ENCODE measurements at regions of chr19 and their contacts with region 1.

Region 1: GRCh38 chr19:13880059-13881043 is 3.4 kb downstream of the NANOS3 start:
- DNase-seq: peak; percentile 99
- ATAC-seq: peak; percentile 94
- H3K4me3 Mint-ChIP-seq: peak overlapping the region; percentile 49
- H3K27ac Mint-ChIP-seq: peak overlapping the region; percentile 85
- H3K4me1 Mint-ChIP-seq: peaks cover 35% of the 10 kb centered on the region
- H3K27me3 Mint-ChIP-seq: no peaks in the 10 kb centered on the region

Region 2: GRCh38 chr19:13905938-13906904 is 25.9 kb after region 1 on chr19 and contains the starts of genes BRME1 and CC2D1A:
- CTCF ChIA-PET with region 1: interaction called, 7 read pairs
- POLR2A ChIA-PET with region 1: no interaction called
- intact Hi-C with region 1: loop called in 1 of 2 experiments (anchors 1 kb)
- DNase-seq: peak; percentile 99
- ATAC-seq: peak; percentile 97
- H3K4me3 Mint-ChIP-seq: peak within 1 kb of the TSS; percentile 75
- H3K27ac Mint-ChIP-seq: peak within 1 kb of the TSS; percentile 93
- H3K4me1 Mint-ChIP-seq: peaks cover 14% of the 10 kb centered on the region
- H3K27me3 Mint-ChIP-seq: no peaks in the 10 kb centered on the region
- total RNA-seq, gene BRME1: 5.3 to 5.5 TPM
- total RNA-seq, gene CC2D1A: 30.2 to 34.3 TPM

Region 3: DNA sequence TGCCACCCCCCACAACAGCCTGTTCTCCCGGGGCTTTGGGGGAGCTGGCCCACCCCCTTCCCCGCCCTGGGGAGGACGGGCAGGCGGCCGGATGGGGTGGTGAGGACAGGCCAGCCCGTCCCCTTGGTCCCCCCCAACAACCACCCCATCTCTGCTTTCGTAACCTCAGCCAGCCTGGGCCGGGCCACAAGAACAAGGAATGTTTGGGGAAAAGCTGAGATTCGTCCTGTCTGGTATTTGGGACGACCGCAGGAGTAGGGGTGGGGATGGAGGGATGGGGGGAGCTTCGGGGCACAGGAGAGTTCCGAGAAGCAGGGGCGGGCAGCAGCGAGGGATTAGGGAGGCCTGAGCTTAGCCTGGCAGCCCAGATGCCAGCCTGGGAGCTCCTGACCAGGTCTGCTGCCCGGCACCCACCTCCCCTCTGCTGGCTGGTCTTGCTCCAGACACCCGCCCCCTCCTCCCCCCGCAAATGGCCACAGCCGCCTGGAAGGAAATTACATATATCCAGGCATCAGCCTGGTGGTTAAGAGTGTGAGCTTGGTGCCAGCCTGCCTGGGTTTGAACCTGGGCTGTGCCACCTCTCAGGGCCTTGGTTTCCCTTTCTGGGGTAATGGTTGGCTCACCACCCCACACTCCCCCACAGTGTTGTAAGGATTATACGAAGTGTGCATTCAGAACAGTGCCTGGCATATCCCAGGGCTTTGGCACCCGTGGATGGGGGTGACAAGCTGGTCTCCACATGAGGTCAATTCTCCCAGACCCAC is 58.1 kb after region 1 on chr19 and contains the start of gene PODNL1:
- CTCF ChIA-PET with region 1: no interaction called
- POLR2A ChIA-PET with region 1: no interaction called
- intact Hi-C with region 1: no loop called
- DNase-seq: no peak
- ATAC-seq: no peak
- H3K4me3 Mint-ChIP-seq: no peak within 1 kb of the TSS
- H3K27ac Mint-ChIP-seq: no peak within 1 kb of the TSS
- H3K4me1 Mint-ChIP-seq: peaks cover 1% of the 10 kb centered on the region
- H3K27me3 Mint-ChIP-seq: peaks cover 6% of the 10 kb centered on the region
- total RNA-seq, gene PODNL1: 0.25 to 0.46 TPM

Region 4: GRCh38 chr19:14031719-14032480 is 151.5 kb after region 1 on chr19 and contains the start of gene IL27RA:
- CTCF ChIA-PET with region 1: interaction called, 8 read pairs
- POLR2A ChIA-PET with region 1: no interaction called
- intact Hi-C with region 1: loop called (anchors 1 to 5 kb)
- DNase-seq: peak; percentile 83
- ATAC-seq: peak; percentile 79
- H3K4me3 Mint-ChIP-seq: peak within 1 kb of the TSS; percentile 92
- H3K27ac Mint-ChIP-seq: peak within 1 kb of the TSS; percentile 90
- H3K4me1 Mint-ChIP-seq: peaks cover 18% of the 10 kb centered on the region
- H3K27me3 Mint-ChIP-seq: no peaks in the 10 kb centered on the region
- total RNA-seq, gene IL27RA: 49.8 to 52.0 TPM

Region 5: GRCh38 chr19:14059093-14059480 is 178.7 kb after region 1 on chr19:
- CTCF ChIA-PET with region 1: interaction called, 4 read pairs
- POLR2A ChIA-PET with region 1: no interaction called
- intact Hi-C with region 1: loop called in 1 of 2 experiments (anchors 5 kb)
- DNase-seq: peak; percentile 77
- ATAC-seq: peak; percentile 59
- H3K4me3 Mint-ChIP-seq: peak overlapping the region; percentile 50
- H3K27ac Mint-ChIP-seq: no peak overlapping the region
- H3K4me1 Mint-ChIP-seq: peaks cover 16% of the 10 kb centered on the region
- H3K27me3 Mint-ChIP-seq: peaks cover 31% of the 10 kb centered on the region

Region 6: GRCh38 chr19:14091081-14091812 is 210.9 kb after region 1 on chr19:
- CTCF ChIA-PET with region 1: interaction called, 4 read pairs
- POLR2A ChIA-PET with region 1: no interaction called
- intact Hi-C with region 1: loop called in 1 of 2 experiments (anchors 1 kb)
- DNase-seq: peak; percentile 76
- ATAC-seq: peak; percentile 75
- H3K4me3 Mint-ChIP-seq: peak overlapping the region; percentile 81
- H3K27ac Mint-ChIP-seq: peak overlapping the region; percentile 98
- H3K4me1 Mint-ChIP-seq: peaks cover 20% of the 10 kb centered on the region
- H3K27me3 Mint-ChIP-seq: no peaks in the 10 kb centered on the region

Region 7: GRCh38 chr19:14405758-14406644 is 525.6 kb after region 1 on chr19:
- CTCF ChIA-PET with region 1: no interaction called
- POLR2A ChIA-PET with region 1: no interaction called
- intact Hi-C with region 1: loop called in 1 of 2 experiments (anchors 2 kb)
- DNase-seq: peak; percentile 96
- ATAC-seq: peak; percentile 78
- H3K4me3 Mint-ChIP-seq: peak overlapping the region; percentile 12
- H3K27ac Mint-ChIP-seq: no peak overlapping the region
- H3K4me1 Mint-ChIP-seq: peaks cover 16% of the 10 kb centered on the region
- H3K27me3 Mint-ChIP-seq: no peaks in the 10 kb centered on the region

Region 8: DNA sequence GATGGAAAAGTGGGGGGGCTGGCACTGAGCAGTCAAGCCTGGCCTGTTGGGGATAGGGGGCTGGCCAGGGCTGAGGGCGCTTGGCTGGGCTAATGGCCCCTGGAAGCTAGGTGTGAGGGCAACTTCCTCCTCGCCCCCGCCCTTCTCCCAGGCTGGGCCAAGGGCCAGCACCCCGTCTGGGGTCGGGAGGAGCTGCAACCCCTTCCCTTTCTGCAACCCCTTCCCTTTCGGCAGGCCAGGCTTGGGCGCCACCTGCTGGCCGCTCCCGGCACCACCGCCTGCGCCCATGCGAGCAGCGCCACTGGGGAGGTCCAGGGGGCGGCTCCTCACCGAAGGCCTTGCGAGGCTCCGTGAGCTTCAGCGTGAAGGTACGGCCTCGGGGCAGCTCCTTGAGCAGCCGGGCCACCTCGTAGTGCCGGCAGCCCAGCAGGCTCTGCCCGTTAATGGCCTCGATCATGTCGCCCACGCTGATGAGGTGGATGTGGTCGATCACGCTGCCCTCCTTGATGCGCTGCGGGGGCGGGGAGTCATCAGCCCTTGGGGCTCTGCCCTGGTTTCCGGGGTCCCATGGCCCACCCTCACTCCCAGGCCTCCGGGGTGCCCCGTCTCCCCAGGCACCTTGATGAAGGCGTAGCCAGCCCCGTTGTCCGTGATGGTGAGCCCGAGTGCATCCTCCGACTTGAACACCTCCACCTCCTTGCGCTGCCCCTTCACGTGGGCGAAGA is 599.8 kb after region 1 on chr19:
- CTCF ChIA-PET with region 1: no interaction called
- POLR2A ChIA-PET with region 1: interaction called, 3 read pairs
- intact Hi-C with region 1: loop called in 1 of 2 experiments (anchors 5 kb)
- DNase-seq: peak; percentile 84
- ATAC-seq: peak; percentile 60
- H3K4me3 Mint-ChIP-seq: no peak overlapping the region
- H3K27ac Mint-ChIP-seq: no peak overlapping the region
- H3K4me1 Mint-ChIP-seq: peaks cover 14% of the 10 kb centered on the region
- H3K27me3 Mint-ChIP-seq: no peaks in the 10 kb centered on the region

Measured in activated CD4-positive, alpha-beta T cell treated with anti-CD3 and anti-CD28 coated beads for 36 hours (primary cell).